HEK293T (cell line): ENCODE measurements at regions of chr13 and their contacts with region 1.

Region 1: DNA sequence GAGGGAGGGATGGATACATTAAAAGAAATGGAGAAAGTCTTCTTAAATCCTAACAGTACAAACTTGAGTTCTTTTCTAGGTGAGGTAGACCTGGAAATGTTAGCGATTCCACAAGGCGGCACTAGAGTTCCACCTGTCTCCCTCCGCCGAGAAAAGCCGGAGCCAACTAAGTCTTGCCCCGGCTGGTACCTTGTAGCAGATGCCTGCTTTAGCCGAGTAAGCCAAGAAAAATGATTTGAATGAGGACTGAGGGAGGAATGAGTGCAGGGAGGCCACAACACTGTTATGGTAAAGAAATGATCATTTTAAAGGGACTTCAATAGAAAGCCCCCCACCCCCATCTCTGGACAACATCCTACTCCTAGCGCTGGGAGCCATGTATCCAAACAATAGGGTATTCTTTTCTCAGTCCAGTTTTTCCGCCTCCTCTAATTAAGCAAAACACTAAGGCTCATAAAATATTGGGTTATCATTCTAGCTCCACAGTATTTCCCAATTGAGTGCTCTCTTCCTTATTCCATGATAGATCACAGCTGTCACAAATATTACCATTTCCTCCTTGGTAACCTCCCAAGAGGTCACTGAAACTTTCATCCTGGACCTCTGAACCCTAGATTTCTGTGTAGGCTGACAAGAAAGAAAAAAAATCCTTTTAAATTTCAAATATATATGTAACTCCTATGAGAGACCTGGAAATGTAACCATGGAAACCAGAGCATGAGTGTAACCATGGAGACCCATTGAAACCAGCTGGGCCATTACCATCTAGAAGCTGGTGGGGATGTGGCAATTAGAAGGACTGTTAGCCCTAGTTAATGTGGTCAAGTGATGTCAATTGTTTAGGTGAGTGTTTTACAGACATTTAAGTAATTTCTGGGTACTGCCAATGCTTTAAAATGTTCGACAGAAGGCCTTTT is 58.3 kb downstream of the GPALPP1 start:
- DNase-seq: peak; percentile 78

Region 2: GRCh38 chr13:45004096-45004495 is 43.6 kb before region 1 on chr13:
- CTCF ChIA-PET with region 1: no interaction called
- POLR2A ChIA-PET with region 1: no interaction called
- DNase-seq: no peak

Region 3: DNA sequence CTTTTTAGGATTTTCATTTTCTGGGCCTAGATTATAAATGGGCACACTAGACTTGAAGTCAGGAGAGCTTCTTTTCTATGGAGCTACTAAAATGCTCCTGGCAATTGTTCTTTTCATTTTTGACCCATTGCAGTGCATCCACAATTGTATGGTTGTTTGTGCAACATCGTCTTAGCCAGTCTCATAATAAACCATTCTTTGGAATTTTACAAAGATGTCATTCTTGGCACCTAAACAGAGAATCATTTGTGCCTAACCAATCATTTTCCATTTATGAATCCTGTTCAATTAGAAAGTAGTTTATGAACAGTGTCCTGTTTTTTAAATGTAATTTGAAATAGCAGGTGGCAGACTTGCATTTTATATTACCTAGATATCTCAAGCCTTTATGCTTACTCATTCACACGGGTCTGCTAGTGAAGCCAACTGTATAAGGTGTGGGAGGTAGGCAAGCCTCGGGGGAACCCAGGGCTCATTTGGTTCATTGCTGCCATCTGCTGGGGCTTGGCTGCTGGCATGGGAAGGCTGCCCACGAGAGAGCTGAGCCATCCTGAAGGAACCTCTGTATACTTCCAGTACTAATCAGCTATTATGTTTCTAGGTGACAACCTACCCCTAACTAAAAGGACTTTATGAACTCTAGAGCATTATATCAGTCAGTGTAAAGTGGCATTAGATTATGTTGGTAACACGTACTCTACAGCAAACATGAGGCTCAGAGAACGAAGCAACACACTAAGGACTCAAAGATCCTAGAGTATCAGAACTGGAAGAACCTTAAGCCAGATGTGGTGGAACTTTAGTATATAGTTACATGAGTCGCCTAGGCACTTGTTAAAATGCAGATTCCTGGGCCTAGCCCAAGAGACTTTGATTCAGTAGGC is 233.3 kb after region 1 on chr13:
- CTCF ChIA-PET with region 1: interaction called, 10 read pairs
- POLR2A ChIA-PET with region 1: interaction called, 3 read pairs
- DNase-seq: peak; percentile 69

Region 4: DNA sequence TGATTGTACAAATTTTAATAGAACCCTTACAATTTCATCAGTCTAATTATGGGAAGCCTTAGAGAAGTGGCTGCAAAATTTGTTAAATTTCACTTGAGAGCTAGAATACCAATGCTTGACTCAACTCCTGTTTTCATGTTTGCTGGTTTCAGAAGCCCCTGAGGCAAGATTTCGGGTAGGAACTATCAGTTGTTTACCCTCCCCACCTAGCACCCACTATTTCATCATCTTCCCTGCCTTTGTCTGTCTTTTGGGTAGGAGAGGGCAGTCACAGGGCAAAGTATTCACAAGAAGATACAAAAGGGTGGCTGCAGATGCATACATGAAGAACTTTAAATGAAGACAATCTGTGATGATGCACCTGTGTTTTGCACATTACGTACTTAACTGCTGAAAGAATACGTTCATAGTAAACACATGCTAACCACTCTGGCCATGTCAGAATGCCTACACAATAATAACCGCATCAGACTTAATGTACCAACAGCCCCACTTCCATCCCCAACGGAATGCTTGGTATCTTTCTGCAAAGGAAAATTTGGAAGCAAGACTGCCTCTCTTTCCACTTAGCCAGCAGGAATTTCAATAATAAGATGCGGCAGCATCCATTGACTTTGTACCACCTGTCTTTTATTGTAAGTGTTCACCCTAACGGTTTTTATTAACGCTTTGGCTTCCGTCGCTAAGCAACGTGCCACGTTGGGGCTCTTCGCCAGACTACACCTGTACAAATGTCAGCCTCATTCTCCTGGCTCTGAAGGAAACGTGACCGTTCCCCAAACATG is 262.9 kb after region 1 on chr13:
- CTCF ChIA-PET with region 1: interaction called, 13 read pairs
- POLR2A ChIA-PET with region 1: no interaction called
- DNase-seq: no peak